ENCODE measurements at regions of chrX and their contacts with region 1.

Region 1: GRCh38 chrX:153667956-153668396 is 5.6 kb downstream of the PNCK start:
- DNase-seq: peak; percentile 63 to 74 (median 67)
- H3K4me3 ChIP-seq: no peak overlapping the region
- H3K4me3 Mint-ChIP-seq: peak overlapping the region; percentile 70 to 90 (median 78)
- H3K27ac ChIP-seq: no peak overlapping the region
- H3K27ac Mint-ChIP-seq: peak overlapping the region in 4 of 7 donors; percentile 37 to 76 (median 66)
- H3K4me1 ChIP-seq: no peaks in the 10 kb centered on the region
- H3K4me1 Mint-ChIP-seq: peaks cover 3 to 14% (median 9%) of the 10 kb centered on the region in 4 donors
- H3K27me3 ChIP-seq: no peaks in the 10 kb centered on the region
- H3K27me3 Mint-ChIP-seq: peaks cover 2 to 9% of the 10 kb centered on the region in 2 donors

Region 2: DNA sequence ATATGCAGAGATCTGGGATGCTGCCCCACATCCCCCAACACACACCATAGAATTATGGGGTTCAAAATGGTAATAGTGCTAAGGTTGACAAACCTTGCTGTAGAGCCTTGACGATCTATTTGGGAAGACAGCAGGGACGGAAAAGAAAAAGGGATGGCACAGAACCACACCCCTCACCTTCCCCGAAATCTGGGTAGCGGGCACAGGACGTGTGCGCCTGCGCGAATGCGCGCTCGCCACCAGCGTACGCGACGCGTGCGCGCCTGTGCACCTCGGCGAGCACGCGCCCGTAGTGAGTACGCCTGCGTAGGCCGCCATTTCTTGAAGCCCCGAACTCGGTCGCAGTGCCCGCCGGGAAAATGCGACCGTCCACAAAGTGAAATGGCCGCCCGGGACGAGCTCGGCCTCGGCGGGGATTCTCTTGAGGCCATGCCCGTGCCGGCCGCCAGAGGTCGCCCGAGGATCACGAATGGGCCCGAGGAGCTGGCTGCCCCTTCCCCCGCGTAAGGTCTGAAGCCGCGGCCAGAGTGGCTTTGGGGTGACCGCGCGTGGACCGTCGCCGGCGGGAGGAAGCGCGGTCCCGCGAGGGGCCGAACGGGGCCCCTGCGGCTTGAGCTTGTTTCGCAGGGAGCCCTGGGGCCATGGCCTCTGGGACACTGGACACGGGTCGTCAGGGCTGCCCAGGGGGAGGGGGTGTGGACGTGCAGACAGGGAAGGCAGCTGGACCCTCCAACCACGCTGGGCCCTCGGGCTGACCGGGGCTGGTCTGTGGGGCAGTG is 726.5 kb before region 1 on chrX:
- CTCF ChIA-PET with region 1: interaction called, 22 read pairs
- POLR2A ChIA-PET with region 1: no interaction called
- intact Hi-C with region 1: loop called (anchors 1 kb)
- DNase-seq: peak; percentile 89 to 92 (median 90)
- H3K4me3 ChIP-seq: peak overlapping the region in 1 of 2 donors; percentile 68
- H3K4me3 Mint-ChIP-seq: peak overlapping the region; percentile 79 to 91 (median 85)
- H3K27ac ChIP-seq: peak overlapping the region; percentile 53
- H3K27ac Mint-ChIP-seq: peak overlapping the region; percentile 85 to 91 (median 89)
- H3K4me1 ChIP-seq: peaks cover 5% of the 10 kb centered on the region
- H3K4me1 Mint-ChIP-seq: peaks cover 4 to 13% (median 7%) of the 10 kb centered on the region in 4 donors
- H3K27me3 ChIP-seq: no peaks in the 10 kb centered on the region
- H3K27me3 Mint-ChIP-seq: no peaks in the 10 kb centered on the region

Region 3: GRCh38 chrX:153032397-153033118 is 635.4 kb before region 1 on chrX:
- CTCF ChIA-PET with region 1: interaction called, 19 read pairs
- POLR2A ChIA-PET with region 1: interaction called, 3 read pairs
- intact Hi-C with region 1: loop called (anchors 2 kb)
- DNase-seq: peak; percentile 38 to 62 (median 57)
- H3K4me3 ChIP-seq: peak overlapping the region in 1 of 2 donors; percentile 36
- H3K4me3 Mint-ChIP-seq: peak overlapping the region; percentile 83 to 91 (median 86)
- H3K27ac ChIP-seq: peak overlapping the region; percentile 52
- H3K27ac Mint-ChIP-seq: peak overlapping the region; percentile 79 to 94 (median 90)
- H3K4me1 ChIP-seq: peaks cover 9% of the 10 kb centered on the region
- H3K4me1 Mint-ChIP-seq: peaks cover 0 to 24% (median 8%) of the 10 kb centered on the region in 4 donors
- H3K27me3 ChIP-seq: no peaks in the 10 kb centered on the region
- H3K27me3 Mint-ChIP-seq: no peaks in the 10 kb centered on the region

Region 4: GRCh38 chrX:153554519-153555167 is 113.3 kb before region 1 on chrX:
- CTCF ChIA-PET with region 1: interaction called, 15 read pairs
- POLR2A ChIA-PET with region 1: interaction called, 3 read pairs
- intact Hi-C with region 1: loop called (anchors 1 kb)
- DNase-seq: peak; percentile 51 to 59 (median 53)
- H3K4me3 ChIP-seq: no peak overlapping the region
- H3K4me3 Mint-ChIP-seq: no peak overlapping the region
- H3K27ac ChIP-seq: no peak overlapping the region
- H3K27ac Mint-ChIP-seq: no peak overlapping the region
- H3K4me1 ChIP-seq: no peaks in the 10 kb centered on the region
- H3K4me1 Mint-ChIP-seq: no peaks in the 10 kb centered on the region
- H3K27me3 ChIP-seq: no peaks in the 10 kb centered on the region
- H3K27me3 Mint-ChIP-seq: no peaks in the 10 kb centered on the region

Region 5: DNA sequence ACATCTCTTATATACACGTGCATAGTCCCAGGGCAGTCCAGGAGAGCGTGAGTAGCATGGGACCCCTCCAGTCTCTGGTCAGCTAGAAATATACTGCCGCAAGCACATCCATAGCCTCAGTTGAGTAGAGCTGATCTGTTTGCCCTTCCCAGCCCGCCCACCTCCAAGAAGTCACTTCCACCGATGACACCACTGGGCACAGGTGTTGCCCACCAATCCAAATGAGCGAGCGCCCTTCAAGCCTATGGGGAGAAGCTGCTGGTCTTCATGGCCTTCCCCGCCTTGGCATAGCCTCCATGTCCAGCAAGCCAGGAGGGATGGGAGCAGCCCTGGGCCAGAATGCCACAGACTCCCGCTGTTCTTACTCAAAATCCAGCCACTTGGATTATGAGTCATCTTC is 10.8 kb before region 1 on chrX:
- CTCF ChIA-PET with region 1: interaction called, 13 read pairs
- POLR2A ChIA-PET with region 1: no interaction called
- intact Hi-C with region 1: no loop called
- DNase-seq: no peak
- H3K4me3 ChIP-seq: no peak overlapping the region
- H3K4me3 Mint-ChIP-seq: no peak overlapping the region
- H3K27ac ChIP-seq: no peak overlapping the region
- H3K27ac Mint-ChIP-seq: no peak overlapping the region
- H3K4me1 ChIP-seq: no peaks in the 10 kb centered on the region
- H3K4me1 Mint-ChIP-seq: peaks cover 0 to 4% (median 1%) of the 10 kb centered on the region in 4 donors
- H3K27me3 ChIP-seq: no peaks in the 10 kb centered on the region
- H3K27me3 Mint-ChIP-seq: peaks cover 0 to 1% of the 10 kb centered on the region in 2 donors

Measured in CD4-positive, alpha-beta memory T cell (primary cell).